Naive thymus-derived CD4-positive, alpha-beta T cell (primary cell): ENCODE measurements at regions of chr13 and their contacts with region 1.

Region 1: DNA sequence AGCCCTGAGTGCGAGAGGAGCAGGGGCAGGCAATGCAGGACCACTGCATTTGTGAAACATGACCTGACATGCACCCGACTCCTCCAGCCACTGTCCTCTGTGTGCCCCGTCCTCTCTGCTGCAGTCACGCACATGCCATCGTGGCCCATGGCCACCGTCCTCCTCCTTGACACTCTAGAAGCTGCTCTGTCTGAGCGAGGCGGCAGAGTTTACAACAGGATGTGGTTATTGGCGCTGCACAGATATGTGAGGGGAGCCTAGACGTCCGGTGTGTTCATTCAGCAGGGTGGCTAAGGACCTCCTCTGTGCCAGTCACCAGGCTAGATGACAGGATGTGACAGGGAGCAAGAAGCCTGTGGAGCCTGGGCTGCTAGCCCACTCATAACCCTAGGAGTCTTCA is 277.8 kb downstream of the FOXO1 start:
- DNase-seq: peak; percentile 36 to 88 (median 82)
- ATAC-seq: peak; percentile 96
- H3K4me3 ChIP-seq: peak overlapping the region; percentile 80
- H3K4me3 Mint-ChIP-seq: peak overlapping the region; percentile 80 to 95 (median 88)
- H3K27ac ChIP-seq: peak overlapping the region; percentile 78
- H3K27ac Mint-ChIP-seq: peak overlapping the region; percentile 95 to 100 (median 98)
- H3K4me1 ChIP-seq: peaks cover 16 to 23% of the 10 kb centered on the region in 2 donors
- H3K4me1 Mint-ChIP-seq: peaks cover 35 to 76% (median 60%) of the 10 kb centered on the region in 7 donors
- H3K27me3 ChIP-seq: no peaks in the 10 kb centered on the region
- H3K27me3 Mint-ChIP-seq: no peaks in the 10 kb centered on the region

Region 2: GRCh38 chr13:39777527-39778061 is 611.0 kb before region 1 on chr13:
- CTCF ChIA-PET with region 1: no interaction called
- POLR2A ChIA-PET with region 1: no interaction called
- intact Hi-C with region 1: loop called in 1 of 2 experiments (anchors 5 kb)
- DNase-seq: peak in 7 of 9 donors; percentile 7 to 58 (median 48)
- ATAC-seq: peak; percentile 62
- H3K4me3 ChIP-seq: no peak overlapping the region
- H3K4me3 Mint-ChIP-seq: peak overlapping the region in 2 of 10 donors; percentile 6 to 18
- H3K27ac ChIP-seq: no peak overlapping the region
- H3K27ac Mint-ChIP-seq: peak overlapping the region in 8 of 9 donors; percentile 8 to 60 (median 18)
- H3K4me1 ChIP-seq: peaks cover 0 to 22% of the 10 kb centered on the region in 2 donors
- H3K4me1 Mint-ChIP-seq: peaks cover 12 to 40% (median 36%) of the 10 kb centered on the region in 7 donors
- H3K27me3 ChIP-seq: no peaks in the 10 kb centered on the region
- H3K27me3 Mint-ChIP-seq: no peaks in the 10 kb centered on the region

Region 3: GRCh38 chr13:40069173-40070044 is 319.2 kb before region 1 on chr13:
- CTCF ChIA-PET with region 1: interaction called, 6 read pairs
- POLR2A ChIA-PET with region 1: no interaction called
- intact Hi-C with region 1: loop called (anchors 1 to 2 kb)
- DNase-seq: peak; percentile 46 to 76 (median 64)
- ATAC-seq: peak; percentile 96
- H3K4me3 ChIP-seq: no peak overlapping the region
- H3K4me3 Mint-ChIP-seq: peak overlapping the region; percentile 34 to 86 (median 68)
- H3K27ac ChIP-seq: no peak overlapping the region
- H3K27ac Mint-ChIP-seq: peak overlapping the region; percentile 22 to 88 (median 64)
- H3K4me1 ChIP-seq: peaks cover 0 to 22% of the 10 kb centered on the region in 2 donors
- H3K4me1 Mint-ChIP-seq: peaks cover 6 to 44% (median 29%) of the 10 kb centered on the region in 7 donors
- H3K27me3 ChIP-seq: no peaks in the 10 kb centered on the region
- H3K27me3 Mint-ChIP-seq: no peaks in the 10 kb centered on the region

Region 4: GRCh38 chr13:40377783-40378182 is 10.8 kb before region 1 on chr13:
- CTCF ChIA-PET with region 1: interaction called, 3 read pairs
- POLR2A ChIA-PET with region 1: interaction called, 5 read pairs
- intact Hi-C with region 1: loop called in 1 of 2 experiments (anchors 1 kb)
- DNase-seq: no peak
- ATAC-seq: no peak
- H3K4me3 ChIP-seq: no peak overlapping the region
- H3K4me3 Mint-ChIP-seq: no peak overlapping the region
- H3K27ac ChIP-seq: no peak overlapping the region
- H3K27ac Mint-ChIP-seq: peak overlapping the region in 1 of 9 donors; percentile 7
- H3K4me1 ChIP-seq: peaks cover 8 to 9% of the 10 kb centered on the region in 2 donors
- H3K4me1 Mint-ChIP-seq: peaks cover 25 to 51% (median 40%) of the 10 kb centered on the region in 7 donors
- H3K27me3 ChIP-seq: no peaks in the 10 kb centered on the region
- H3K27me3 Mint-ChIP-seq: no peaks in the 10 kb centered on the region

Region 5: GRCh38 chr13:40494513-40494912 is 105.9 kb after region 1 on chr13:
- CTCF ChIA-PET with region 1: no interaction called
- POLR2A ChIA-PET with region 1: no interaction called
- intact Hi-C with region 1: loop called in 1 of 2 experiments (anchors 1 kb)
- DNase-seq: peak in 7 of 9 donors; percentile 18 to 64 (median 59)
- ATAC-seq: peak; percentile 66
- H3K4me3 ChIP-seq: peak overlapping the region; percentile 49
- H3K4me3 Mint-ChIP-seq: peak overlapping the region; percentile 76 to 97 (median 85)
- H3K27ac ChIP-seq: peak overlapping the region; percentile 70
- H3K27ac Mint-ChIP-seq: peak overlapping the region; percentile 88 to 98 (median 96)
- H3K4me1 ChIP-seq: peaks cover 38 to 66% of the 10 kb centered on the region in 2 donors
- H3K4me1 Mint-ChIP-seq: peaks cover 54 to 92% (median 85%) of the 10 kb centered on the region in 7 donors
- H3K27me3 ChIP-seq: no peaks in the 10 kb centered on the region
- H3K27me3 Mint-ChIP-seq: no peaks in the 10 kb centered on the region

Region 6: GRCh38 chr13:40777166-40777808 is 388.7 kb after region 1 on chr13:
- CTCF ChIA-PET with region 1: no interaction called
- POLR2A ChIA-PET with region 1: no interaction called
- intact Hi-C with region 1: loop called (anchors 2 to 5 kb)
- DNase-seq: peak in 2 of 9 donors; percentile 15 to 44
- ATAC-seq: peak; percentile 78
- H3K4me3 ChIP-seq: peak overlapping the region; percentile 37
- H3K4me3 Mint-ChIP-seq: peak overlapping the region; percentile 68 to 92 (median 82)
- H3K27ac ChIP-seq: peak overlapping the region; percentile 61
- H3K27ac Mint-ChIP-seq: peak overlapping the region; percentile 94 to 99 (median 97)
- H3K4me1 ChIP-seq: peaks cover 21 to 24% of the 10 kb centered on the region in 2 donors
- H3K4me1 Mint-ChIP-seq: peaks cover 19 to 36% (median 32%) of the 10 kb centered on the region in 7 donors
- H3K27me3 ChIP-seq: no peaks in the 10 kb centered on the region
- H3K27me3 Mint-ChIP-seq: no peaks in the 10 kb centered on the region